ENCODE measurements at regions of chr18 and their contacts with region 1.

Region 1: GRCh38 chr18:25915907-25916306 is 174.5 kb downstream of the SS18 start:
- DNase-seq: peak; percentile 19
- H3K4me3 ChIP-seq: no peak overlapping the region
- H3K27ac ChIP-seq: no peak overlapping the region
- H3K4me1 ChIP-seq: no peaks in the 10 kb centered on the region
- CTCF ChIP-seq: peak; percentile 71

Region 2: DNA sequence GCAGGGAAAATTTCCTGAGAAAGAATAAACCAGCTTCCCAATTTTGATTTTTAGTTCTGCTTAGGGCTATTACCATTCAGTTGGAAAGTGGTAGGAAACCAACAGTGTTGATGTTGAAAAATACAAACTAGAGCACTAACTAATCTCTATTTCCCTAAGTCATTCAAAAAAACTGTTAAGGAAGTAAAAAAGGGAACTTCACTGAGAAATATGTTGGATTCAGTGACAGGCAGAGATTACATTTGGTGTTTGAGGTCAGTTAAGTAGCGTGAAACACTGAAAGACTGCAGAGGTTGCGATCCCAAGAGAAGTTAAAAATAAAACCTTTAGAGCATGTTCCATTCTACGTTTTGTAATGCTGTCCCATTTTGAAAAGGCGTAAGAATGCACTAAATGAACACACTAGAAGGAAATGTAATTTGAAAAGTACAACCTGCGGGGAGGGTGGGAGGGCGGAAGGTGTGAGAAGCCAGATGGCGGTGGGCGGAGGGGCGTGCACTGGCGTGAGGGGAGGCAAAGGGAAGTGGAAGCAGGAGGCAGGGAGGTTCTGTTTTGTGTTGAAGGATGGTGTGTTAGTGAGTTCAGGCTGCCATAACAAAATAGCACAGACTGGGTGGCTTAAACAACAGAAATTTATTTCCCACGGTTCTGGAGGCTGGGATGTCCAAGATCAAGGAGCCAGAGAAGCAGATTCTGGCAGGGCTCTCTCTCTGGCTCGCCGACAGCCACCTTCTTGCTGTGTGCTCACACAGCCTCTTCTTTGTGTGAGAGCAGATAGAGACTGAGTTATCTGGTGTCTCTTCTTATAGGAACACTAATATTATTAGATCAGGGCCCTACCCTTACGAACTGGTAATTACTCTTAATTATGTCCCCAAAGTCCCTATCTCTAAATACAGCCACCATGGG is 726.8 kb after region 1 on chr18:
- CTCF ChIA-PET with region 1: no interaction called
- POLR2A ChIA-PET with region 1: no interaction called
- intact Hi-C with region 1: loop called (anchors 10 kb)
- DNase-seq: no peak
- H3K4me3 ChIP-seq: no peak overlapping the region
- H3K27ac ChIP-seq: no peak overlapping the region
- H3K4me1 ChIP-seq: no peaks in the 10 kb centered on the region
- CTCF ChIP-seq: no peak